ENCODE measurements at regions of chr1 and their contacts with region 1.

Region 1: DNA sequence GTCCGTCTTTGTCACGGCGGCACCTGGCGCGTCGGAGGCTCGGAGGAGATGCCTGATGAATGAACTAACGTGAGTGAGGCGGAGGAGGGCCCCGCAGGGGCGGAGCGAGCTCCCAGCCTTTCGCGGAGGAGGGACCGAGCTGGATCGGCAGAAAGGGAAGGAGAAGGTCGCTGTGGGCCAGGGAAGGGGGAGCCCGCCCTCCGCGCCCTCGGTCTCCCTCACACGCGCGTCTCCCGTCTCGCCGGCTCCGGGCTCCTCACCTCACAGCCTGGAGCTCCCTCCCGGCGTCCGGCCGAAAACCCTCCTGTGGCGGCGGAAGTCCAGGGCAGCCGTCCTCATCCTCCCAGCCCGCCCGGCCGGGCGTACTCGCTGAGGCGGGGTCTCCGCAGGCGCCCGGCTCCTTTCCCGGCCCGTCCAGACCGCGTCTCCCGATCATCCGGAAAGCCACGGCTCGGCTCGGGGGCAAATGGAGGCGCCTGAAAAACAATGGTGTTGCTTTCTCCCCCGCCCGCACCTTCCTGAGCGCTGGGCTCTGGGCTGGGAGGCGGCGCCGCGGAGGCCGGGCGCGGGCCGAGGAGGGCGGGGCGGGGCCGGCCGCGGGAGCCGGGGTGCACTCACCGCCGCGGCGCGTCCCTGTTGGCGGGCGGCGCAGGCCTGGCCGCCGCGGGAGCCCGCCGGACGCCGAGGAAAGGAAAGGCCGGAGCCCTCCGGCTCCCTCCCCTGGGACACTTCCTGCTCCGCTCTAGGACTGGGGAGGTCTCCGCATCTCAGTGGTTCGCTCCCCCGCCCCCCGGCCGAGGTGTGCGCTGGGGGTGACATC is at the start of gene ZNF496:
- DNase-seq: peak; percentile 93 to 97 (median 94)
- ATAC-seq: peak; percentile 82
- H3K4me3 ChIP-seq: peak within 1 kb of the TSS; percentile 92
- H3K27ac ChIP-seq: peak within 1 kb of the TSS; percentile 91
- H3K4me1 ChIP-seq: peaks cover 36 to 67% of the 10 kb centered on the region in 2 experiments
- H3K27me3 ChIP-seq: no peaks in the 10 kb centered on the region
- CTCF ChIP-seq: no peak
- EP300 ChIP-seq: peak; percentile 23; the same call in 1 of the 2 replicates
- POLR2A ChIP-seq: peak; percentile 83
- RAD21 ChIP-seq: 0 out of 4 replicates have a peak, but pooled peaks of 1 of the 2 experiments have one; percentile 24
- polyA plus RNA-seq, gene ZNF496: 4.3 to 5.9 TPM

Region 2: DNA sequence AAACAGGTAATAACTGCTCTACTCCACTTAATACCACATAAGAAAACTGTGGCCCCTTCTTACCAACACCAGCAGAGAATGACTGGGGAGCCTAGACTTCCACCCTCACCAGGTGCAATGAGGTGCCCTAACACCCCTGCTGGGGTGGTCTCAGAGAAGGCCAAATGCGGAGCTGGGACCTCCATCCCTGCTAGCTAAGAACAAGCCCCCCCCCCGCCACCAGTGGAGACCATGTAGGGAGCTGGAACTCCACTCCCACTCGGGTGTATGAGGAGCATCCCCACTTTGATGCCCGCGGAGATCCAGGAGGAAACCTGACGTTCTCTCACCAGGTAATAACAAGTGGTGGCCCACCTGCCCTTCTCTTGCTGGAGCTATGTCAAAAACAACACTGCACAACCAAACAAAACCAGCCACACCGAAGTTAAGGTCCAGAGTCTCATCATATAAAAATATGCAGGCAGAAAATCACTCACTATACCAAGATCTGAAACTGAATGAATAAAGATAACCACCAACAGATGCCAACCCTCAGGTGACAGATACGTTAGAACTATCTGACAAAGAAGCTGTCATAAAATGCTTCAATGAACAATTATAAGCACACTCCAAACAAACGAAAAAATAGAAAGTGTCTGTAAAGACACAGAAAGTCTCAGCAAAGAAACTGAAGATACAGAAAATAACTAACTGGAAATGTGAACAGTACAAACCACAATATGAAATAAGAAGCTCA is 13.8 kb before region 1 on chr1:
- CTCF ChIA-PET with region 1: no interaction called
- POLR2A ChIA-PET with region 1: interaction called, 19 read pairs
- in situ Hi-C with region 1: no loop called
- intact Hi-C with region 1: no loop called
- DNase-seq: no peak
- ATAC-seq: no peak
- H3K4me3 ChIP-seq: no peak overlapping the region
- H3K27ac ChIP-seq: no peak overlapping the region
- H3K4me1 ChIP-seq: peaks cover 0 to 3% of the 10 kb centered on the region in 2 experiments; a peak in 1 of 5 replicates
- H3K27me3 ChIP-seq: no peaks in the 10 kb centered on the region
- CTCF ChIP-seq: no peak
- EP300 ChIP-seq: no peak
- POLR2A ChIP-seq: no peak
- RAD21 ChIP-seq: no peak

Region 3: DNA sequence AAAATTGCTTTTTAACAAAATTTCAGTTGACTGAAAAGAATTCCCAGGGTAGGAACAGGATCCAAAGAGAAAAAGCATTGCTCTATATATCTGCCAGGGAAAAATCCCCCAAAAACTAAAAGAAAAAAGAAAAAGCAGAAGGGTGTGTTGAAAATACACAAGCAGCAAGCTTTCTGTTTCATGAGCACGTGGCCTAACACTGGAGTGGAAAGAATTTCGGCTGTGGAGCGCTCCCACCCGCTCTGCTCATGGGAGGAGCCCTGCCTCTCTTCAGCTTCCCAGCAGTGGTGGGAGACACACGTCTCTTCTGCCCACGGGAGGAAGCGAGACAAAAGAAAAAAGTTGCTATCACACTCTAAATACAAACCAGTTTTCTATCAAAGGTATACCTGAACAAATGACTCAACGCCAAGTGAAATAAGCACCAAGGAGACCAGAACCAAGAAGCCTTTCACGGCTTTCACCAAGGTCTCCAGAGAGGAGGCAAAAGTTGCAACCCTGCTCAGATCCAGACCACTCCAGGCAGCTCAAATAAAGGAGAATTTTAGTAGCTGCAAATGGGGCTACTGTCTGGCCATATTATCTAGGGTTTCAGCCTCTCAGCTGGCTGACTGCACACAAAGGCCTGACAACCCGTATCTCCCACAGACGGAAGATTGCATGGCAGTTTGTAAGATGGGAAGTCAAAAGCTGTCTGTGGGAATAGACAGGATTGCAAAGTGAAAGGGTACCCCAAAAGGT is 29.8 kb after region 1 on chr1:
- CTCF ChIA-PET with region 1: no interaction called
- POLR2A ChIA-PET with region 1: interaction called, 4 read pairs
- in situ Hi-C with region 1: no loop called
- intact Hi-C with region 1: loop called (anchors 2 kb)
- DNase-seq: peak in 2 of 4 experiments; percentile 51 to 63
- ATAC-seq: peak; percentile 72
- H3K4me3 ChIP-seq: no peak overlapping the region
- H3K27ac ChIP-seq: peak overlapping the region; percentile 72; the same call in 2 of the 3 replicates
- H3K4me1 ChIP-seq: peaks cover 0 to 33% of the 10 kb centered on the region in 2 experiments; a peak in 4 of 5 replicates
- H3K27me3 ChIP-seq: no peaks in the 10 kb centered on the region
- CTCF ChIP-seq: no peak
- EP300 ChIP-seq: no peak
- POLR2A ChIP-seq: no peak
- RAD21 ChIP-seq: peak; percentile 8 to 12; a peak in 2 of 4 replicates